ENCODE measurements at regions of chr2 and their contacts with region 1.

Region 1: DNA sequence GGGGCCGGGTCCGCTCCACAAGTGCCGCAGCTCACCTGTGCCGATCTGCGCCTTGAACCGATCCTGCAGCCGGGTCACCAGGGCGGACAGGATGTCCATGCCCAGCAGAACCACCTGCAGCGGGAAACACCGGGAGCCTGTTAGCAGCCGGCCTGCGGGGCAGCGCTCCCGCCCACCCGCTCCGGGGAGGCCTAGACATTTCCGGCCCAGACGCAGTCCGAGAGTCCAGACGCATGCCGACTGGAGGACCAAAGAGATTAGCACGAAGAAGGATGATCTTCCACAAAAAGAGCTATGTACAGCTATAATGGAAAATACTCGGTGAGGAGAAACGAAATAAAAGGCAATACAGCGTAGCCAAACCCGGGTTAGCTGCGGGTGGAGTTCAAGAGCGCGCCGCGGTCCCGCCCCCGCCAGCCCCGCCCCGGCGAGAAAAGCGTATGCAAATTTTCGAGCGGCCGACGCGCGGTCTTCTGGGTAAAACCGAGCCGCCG is 421 bp upstream of the RNU4ATAC start:
- DNase-seq: peak; percentile 86
- CTCF ChIP-seq: no peak

Region 2: DNA sequence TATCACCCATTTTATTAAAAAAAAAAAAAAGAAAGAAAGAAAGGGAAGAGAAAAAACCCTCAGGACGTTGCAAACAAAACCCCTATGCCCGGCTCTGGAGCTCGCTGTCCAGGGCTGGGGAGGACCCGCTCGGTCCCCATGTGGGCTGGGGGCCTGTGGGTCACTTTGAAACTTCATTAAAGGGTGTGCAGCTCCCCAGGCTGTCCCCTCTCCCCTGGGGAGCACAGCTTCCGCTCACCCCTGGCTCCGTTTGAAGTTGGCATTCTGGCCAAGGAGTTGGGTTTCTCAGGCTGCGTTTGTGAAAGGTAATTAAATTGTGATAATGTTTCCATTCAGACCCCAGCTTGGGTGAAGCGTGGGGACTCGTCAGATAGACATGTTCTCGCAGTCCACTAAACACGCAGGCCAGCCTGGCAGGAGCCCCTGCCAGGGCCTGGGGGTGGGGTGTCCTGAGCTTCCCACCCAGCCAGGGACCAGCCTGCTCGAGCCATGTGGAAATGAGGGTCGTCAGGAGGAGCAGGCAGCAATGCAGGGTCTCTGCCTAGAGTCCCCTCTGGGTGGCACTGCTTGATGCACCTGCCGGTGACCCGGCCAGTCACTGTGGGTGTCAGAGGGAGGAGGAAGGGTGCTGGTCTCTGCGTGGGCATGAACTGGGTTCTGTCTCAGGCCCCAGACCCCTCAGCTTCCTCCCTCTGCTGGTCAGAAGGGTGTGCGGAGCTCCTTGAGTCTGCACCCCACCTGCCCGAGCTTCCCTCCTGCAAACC is 1018.1 kb before region 1 on chr2:
- CTCF ChIA-PET with region 1: no interaction called
- POLR2A ChIA-PET with region 1: no interaction called
- DNase-seq: no peak
- CTCF ChIP-seq: no peak

Region 3: GRCh38 chr2:121372721-121373353 is 157.4 kb before region 1 on chr2:
- CTCF ChIA-PET with region 1: no interaction called
- POLR2A ChIA-PET with region 1: no interaction called
- DNase-seq: no peak
- CTCF ChIP-seq: no peak

Region 4: GRCh38 chr2:121547646-121548045 is 17.4 kb after region 1 on chr2:
- CTCF ChIA-PET with region 1: interaction called, 20 read pairs
- POLR2A ChIA-PET with region 1: interaction called, 8 read pairs
- DNase-seq: no peak
- CTCF ChIP-seq: no peak

Region 5: DNA sequence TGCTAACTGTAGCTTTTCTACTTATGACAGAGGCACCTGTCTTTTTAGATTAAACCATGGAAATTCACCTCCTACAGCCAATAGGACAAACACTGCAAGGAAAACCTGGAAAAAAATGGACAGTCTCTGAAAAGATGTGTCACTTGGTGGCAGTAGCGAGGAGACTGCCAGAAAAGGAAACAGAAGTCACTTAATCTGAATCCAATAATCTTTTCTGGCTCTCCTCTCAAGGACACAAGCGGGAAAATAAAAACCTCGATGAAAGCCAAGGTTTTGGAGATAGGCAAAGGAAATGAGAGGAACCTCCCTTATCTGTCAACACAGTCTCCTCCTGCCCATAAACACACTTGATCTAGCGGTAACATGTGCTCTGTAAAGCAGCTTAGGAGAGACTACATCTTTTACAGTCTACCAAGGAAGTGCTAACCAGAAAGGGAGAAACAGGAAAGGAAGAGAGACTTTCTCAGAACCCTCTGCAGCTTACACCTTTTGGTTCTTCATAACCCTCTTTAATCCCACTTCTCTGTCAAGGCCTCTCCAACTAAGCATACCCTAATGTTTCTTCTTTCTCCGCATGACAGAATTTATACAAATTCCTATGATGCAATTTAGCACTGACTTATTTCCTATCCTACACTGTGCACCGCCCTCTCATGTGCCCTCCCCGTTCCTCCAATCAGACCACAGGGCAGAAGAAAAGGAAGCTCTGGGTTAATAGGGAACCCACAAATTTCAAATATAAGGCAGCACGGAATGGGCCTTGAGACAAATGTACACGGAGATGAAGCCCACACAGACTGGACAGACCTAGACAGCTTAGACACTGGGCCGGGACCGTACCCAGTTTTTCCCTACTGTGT is 66.2 kb after region 1 on chr2:
- CTCF ChIA-PET with region 1: interaction called, 4 read pairs
- POLR2A ChIA-PET with region 1: interaction called, 10 read pairs
- DNase-seq: peak; percentile 46
- CTCF ChIP-seq: peak; percentile 48

Region 6: DNA sequence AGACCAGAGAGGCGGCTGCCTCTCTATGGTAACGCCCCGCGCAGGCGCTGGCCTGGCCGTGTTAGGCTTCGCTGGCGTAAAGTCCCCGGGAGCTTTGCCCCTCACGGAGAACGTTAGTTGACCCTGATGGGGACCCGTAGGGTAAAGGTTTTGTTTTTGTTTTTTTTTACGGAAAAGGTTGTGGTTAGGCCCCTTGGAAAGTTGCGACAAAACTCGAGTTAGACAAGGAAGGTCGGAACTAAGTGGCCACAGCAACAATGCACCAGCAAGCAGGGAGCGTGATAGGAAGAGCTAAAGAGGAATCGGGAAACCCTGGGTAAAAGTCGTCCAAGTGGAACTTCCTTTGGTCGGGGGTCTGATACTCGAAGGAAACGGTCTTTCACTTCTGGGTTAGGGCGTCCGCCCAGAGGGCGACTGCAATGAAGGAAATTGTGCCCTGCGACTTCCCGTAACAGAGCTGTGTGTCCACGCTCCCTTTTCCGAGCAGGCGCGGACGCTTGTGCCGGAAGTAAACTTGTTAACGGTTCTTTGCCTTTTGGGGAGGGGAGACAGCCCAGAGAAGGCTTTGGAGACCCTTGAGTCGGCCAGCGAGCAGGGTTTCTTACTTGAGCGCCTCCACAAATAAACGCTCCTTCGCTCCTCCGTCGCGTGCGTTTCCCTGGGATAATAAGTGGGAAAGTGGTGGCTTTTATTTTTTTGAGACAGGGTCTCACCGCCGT is 119.5 kb after region 1 on chr2:
- CTCF ChIA-PET with region 1: interaction called, 3 read pairs
- POLR2A ChIA-PET with region 1: interaction called, 17 read pairs
- DNase-seq: peak; percentile 98
- CTCF ChIP-seq: no peak

Region 7: DNA sequence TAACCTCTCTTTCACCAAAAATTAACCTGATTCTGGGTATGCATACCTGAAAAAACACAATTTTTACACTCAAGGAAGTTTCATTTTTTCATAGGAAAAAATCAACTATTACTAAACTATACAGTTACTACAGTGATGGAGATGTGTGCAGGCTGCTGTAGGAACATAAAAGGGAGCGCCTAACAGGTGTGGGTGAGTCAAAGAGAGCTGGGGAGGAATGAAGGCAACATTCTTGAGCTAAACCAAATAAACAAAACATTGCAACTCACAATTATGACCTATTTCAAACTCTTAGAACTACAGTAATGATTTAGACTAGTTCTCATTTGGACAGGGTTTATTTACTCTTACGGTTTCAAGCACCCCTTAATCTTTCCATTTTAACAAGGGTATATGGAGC is 132.4 kb after region 1 on chr2:
- CTCF ChIA-PET with region 1: interaction called, 3 read pairs
- POLR2A ChIA-PET with region 1: interaction called, 10 read pairs
- DNase-seq: no peak
- CTCF ChIP-seq: no peak

Region 8: DNA sequence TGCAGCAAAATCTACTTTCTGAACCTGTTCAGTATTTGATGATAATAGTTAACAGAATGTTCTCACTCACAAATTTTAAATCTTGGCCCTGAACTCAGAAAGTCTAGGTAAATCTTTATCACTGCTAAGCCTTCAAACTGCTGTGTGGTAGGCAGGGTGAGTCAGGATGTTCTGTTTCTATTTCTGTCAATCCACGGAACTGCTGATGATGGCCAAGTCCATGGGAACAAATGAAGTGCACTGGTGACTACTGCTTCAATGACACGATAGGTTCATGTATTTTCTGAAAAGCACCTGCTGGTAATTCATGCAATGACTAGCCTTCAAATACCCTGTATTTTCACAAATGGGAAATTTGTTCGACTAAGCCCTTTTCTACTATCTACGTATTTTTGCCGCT is 192.2 kb after region 1 on chr2:
- CTCF ChIA-PET with region 1: interaction called, 18 read pairs
- POLR2A ChIA-PET with region 1: no interaction called
- DNase-seq: no peak
- CTCF ChIP-seq: no peak

Region 9: GRCh38 chr2:121736462-121737341 is 206.4 kb after region 1 on chr2 and contains the start of gene NIFK:
- CTCF ChIA-PET with region 1: interaction called, 4 read pairs
- POLR2A ChIA-PET with region 1: interaction called, 15 read pairs
- DNase-seq: peak; percentile 100
- CTCF ChIP-seq: no peak

Measured in GM10248 (cell line).